T-cell (primary cell): ENCODE measurements at regions of chr6 and their contacts with region 1.

Region 1: GRCh38 chr6:23055523-23055922 is 486.2 kb downstream of the HDGFL1 start:
- DNase-seq: no peak
- ATAC-seq: no peak
- H3K4me3 ChIP-seq: no peak overlapping the region
- H3K4me3 Mint-ChIP-seq: no peak overlapping the region
- H3K27ac ChIP-seq: no peak overlapping the region
- H3K27ac Mint-ChIP-seq: no peak overlapping the region
- H3K4me1 ChIP-seq: no peaks in the 10 kb centered on the region
- H3K4me1 Mint-ChIP-seq: no peaks in the 10 kb centered on the region
- H3K27me3 ChIP-seq: no peaks in the 10 kb centered on the region
- H3K27me3 Mint-ChIP-seq: no peaks in the 10 kb centered on the region

Region 2: DNA sequence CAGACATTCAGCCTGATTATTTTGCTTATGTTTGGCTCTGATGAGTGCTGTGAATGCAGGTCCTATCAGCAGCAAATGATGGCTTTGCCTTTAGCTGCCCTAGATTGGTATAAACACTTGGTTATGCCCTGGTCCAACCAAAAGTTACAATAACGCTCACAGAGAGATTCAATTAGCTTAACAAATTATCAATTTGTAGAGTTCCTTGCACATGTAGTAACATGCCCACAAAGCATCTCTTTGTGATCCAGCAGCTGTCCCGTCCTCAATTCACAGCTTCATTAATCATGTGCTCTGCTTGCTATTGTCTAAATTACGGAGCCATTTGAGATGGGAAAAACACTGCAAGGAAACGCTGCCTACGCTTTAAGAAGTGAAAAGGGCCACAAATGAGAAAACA is 28.2 kb before region 1 on chr6:
- CTCF ChIA-PET with region 1: no interaction called
- POLR2A ChIA-PET with region 1: interaction called in 1 of 2 experiments, 13 read pairs
- DNase-seq: no peak
- ATAC-seq: no peak
- H3K4me3 ChIP-seq: no peak overlapping the region
- H3K4me3 Mint-ChIP-seq: no peak overlapping the region
- H3K27ac ChIP-seq: no peak overlapping the region
- H3K27ac Mint-ChIP-seq: no peak overlapping the region
- H3K4me1 ChIP-seq: no peaks in the 10 kb centered on the region
- H3K4me1 Mint-ChIP-seq: no peaks in the 10 kb centered on the region
- H3K27me3 ChIP-seq: no peaks in the 10 kb centered on the region
- H3K27me3 Mint-ChIP-seq: no peaks in the 10 kb centered on the region